Lower leg skin (tissue), 4 donors: ENCODE measurements at regions of chr7 and their contacts with region 1.

Region 1: GRCh38 chr7:1579481-1580421 is 9.9 kb upstream of the PSMG3 start:
- DNase-seq: peak in 1 of 2 donors; percentile 93
- H3K4me3 ChIP-seq: no peak overlapping the region
- CTCF ChIP-seq: no peak
- POLR2A ChIP-seq: no peak

Region 2: DNA sequence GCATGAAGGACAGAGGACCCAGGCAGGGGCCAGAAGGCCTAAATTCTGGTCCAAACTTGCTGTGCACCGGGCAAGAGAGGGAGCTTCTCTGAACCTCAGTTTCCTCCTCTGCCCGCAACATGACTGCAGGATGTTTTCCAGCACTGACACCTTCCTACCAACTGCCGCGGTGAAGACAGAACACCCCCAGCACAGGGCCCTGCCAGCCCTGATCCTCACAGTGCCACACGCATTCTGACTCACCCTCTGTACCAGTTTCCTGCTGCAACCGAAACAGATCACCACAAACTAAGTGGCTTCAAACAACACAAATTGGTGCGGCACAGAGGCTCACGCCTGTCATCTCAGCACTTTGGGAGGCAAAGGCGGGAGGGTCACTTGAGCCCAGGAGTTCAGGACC is 634.9 kb after region 1 on chr7:
- intact Hi-C with region 1: loop called (anchors 10 kb)
- DNase-seq: no peak
- H3K4me3 ChIP-seq: no peak overlapping the region
- CTCF ChIP-seq: no peak
- POLR2A ChIP-seq: no peak

Region 3: DNA sequence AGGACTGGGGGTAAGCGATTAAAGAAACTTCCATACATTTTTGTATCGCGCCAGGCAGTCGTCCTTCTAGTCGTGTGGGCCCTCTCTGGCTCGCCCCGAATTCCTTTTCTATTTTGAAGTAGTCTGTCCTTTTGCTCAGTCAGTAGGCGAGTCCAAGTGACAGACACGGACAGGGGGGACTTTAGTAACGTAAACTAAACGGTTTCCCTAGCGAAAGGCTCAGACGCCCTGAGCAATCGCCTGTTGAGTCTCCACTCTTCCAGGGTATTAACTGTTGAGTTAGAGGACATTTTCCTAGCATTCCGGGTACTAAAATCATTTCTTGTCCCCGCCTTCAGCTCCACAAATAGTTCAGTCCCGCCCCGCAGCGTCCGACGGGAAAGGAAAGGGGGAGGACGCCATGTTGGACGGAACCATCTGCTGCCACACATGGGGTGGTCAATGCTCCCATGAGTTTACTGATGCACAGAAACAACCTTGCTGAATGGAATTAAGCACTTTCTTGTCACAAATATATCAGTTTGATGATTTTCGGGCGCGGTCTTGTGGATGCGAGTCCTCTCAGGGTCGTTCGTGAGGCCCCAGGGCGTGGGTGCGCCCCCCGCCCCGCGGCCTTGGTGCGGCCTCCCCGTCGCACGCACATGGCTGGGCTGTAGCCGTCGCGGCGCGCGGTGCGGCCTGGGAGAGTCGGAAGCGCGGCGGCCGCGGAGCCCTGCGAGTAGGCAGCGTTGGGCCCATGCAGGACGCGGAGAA is 774.6 kb after region 1 on chr7 and contains the start of gene EIF3B:
- intact Hi-C with region 1: loop called (anchors 10 kb)
- DNase-seq: peak; percentile 86 to 98
- H3K4me3 ChIP-seq: peak within 1 kb of the TSS; percentile 98
- CTCF ChIP-seq: peak in 1 of 3 donors; percentile 27
- POLR2A ChIP-seq: no peak
- total RNA-seq, gene EIF3B: 121 to 165 (median 150) TPM